Posterior vena cava (tissue), 2 donors: ENCODE measurements at regions of chrX and their contacts with region 1.

Region 1: DNA sequence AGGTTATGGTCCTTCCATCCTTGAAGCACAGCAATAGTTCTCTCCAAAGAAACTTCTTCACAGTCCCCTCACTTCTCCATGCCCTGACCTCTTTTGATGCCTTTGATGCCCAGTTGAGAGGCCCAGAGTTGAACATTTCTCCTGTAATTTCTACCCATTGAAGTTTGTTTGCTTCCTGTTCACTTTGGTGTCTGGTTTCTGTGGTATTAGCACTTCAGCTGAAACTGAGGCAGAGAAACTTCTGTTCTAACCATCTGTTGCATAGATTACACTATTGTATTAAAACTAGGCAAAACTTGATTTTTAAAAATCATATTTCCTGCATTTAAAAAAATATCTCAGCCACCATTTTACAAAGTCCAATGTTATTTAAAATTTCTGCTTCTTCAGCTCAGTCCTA is 89.8 kb upstream of the ADGRG2 start:
- DNase-seq: no peak

Region 2: GRCh38 chrX:19183761-19184477 is 28.1 kb before region 1 on chrX:
- intact Hi-C with region 1: loop called in 1 of 2 experiments (anchors 1 kb)
- DNase-seq: no peak

Region 3: DNA sequence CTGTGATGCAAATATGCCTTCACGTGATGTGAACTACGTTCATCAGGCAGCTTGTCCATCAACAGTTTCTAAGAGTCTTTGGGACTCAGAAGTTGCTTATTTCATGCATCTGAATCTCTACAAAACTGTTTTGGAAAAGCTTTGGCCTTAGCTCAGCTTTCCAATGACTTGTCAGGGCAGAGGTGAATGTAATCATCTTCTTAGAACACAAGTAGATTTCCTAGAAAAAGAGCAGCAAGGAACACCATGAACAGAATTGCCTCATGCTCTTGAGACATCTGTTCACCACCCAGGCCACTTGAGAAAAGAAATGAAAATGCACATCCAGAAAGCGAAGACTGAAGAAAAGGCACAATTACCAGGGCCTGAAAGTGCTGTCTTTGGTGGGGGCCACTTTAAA is 25.9 kb after region 1 on chrX:
- intact Hi-C with region 1: no loop called
- DNase-seq: no peak